Heart right ventricle (tissue), 16 donors: ENCODE measurements at regions of chr11 and their contacts with region 1.

Region 1: GRCh38 chr11:124865921-124866583 is 820 bp downstream of the ROBO3 start:
- DNase-seq: peak in 1 of 2 donors; percentile 54
- ATAC-seq: peak in 5 of 8 donors; percentile 26 to 60 (median 41)
- H3K4me3 ChIP-seq: peak overlapping the region; percentile 22 to 45 (median 40)
- H3K27ac ChIP-seq: no peak overlapping the region
- H3K4me1 ChIP-seq: peaks cover 12 to 65% (median 42%) of the 10 kb centered on the region in 9 donors
- H3K27me3 ChIP-seq: peaks cover 36 to 100% (median 99%) of the 10 kb centered on the region in 7 donors
- CTCF ChIP-seq: peak; percentile 69 to 90 (median 82)

Region 2: DNA sequence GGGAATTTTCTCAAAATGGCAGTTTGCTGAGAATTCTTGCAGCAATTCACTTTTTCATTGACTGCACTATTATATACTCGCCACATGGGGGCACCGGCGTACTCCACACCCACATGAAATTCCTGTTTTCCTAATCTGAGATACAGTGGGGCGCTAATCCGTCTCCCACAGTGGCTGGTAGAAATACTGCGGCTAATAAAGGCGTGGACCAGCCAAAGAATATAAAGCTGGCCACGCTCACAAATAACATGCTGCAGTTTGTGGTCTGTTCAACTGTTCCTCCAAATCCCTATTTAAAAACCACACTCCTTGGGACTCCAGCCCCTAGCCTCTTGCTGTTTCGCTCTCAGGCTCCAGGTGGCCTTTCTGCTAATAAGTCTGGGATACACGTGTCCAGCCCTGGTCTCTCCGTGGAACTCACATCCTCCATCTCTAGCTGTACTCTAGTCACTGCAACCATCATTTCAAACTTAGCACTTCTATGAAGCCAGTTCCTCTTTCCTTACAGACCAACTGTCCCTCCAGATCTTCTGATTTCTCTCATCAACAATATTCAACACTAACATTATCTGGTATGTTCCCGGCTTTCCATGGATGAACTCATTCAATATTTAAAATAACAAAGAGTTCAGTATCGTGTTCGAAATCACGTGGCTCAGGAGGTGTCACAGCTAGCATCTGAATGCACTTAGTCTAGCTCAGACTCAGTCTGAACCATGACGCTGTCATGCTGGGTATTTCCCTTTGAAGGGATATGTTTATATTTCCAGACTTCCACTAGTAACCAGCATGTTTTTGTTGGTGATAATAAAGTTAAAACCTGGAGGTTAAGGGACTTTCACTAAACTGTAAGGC is 221.4 kb before region 1 on chr11:
- intact Hi-C with region 1: loop called in 1 of 10 experiments (anchors 10 kb)
- DNase-seq: peak; percentile 17 to 35
- ATAC-seq: peak; percentile 57 to 88 (median 80)
- H3K4me3 ChIP-seq: peak overlapping the region in 4 of 10 donors; percentile 1 to 26 (median 12)
- H3K27ac ChIP-seq: no peak overlapping the region
- H3K4me1 ChIP-seq: peaks cover 0 to 12% (median 6%) of the 10 kb centered on the region in 9 donors
- H3K27me3 ChIP-seq: no peaks in the 10 kb centered on the region
- CTCF ChIP-seq: peak; percentile 72 to 87 (median 81)

Region 3: DNA sequence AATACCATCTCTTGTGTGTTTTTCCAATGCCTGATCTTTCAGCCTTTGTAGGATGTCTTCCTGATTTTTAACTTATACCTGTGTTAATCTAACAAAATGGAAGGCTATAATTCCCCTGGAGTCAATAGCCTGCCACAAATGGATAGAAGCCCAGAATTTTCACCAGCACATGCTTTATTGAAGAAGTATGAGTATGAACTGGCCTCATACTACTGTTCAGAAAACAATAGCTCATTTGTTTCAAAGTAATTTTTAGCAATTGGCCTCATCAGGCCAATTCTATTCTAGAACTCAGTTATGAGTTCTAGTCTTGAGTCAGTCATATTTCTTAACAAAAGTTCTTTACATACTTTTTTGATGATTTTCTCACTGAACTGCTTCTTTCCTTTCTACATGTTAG is 156.5 kb after region 1 on chr11:
- intact Hi-C with region 1: no loop called
- DNase-seq: no peak
- ATAC-seq: no peak
- H3K4me3 ChIP-seq: no peak overlapping the region
- H3K27ac ChIP-seq: no peak overlapping the region
- H3K4me1 ChIP-seq: no peaks in the 10 kb centered on the region
- H3K27me3 ChIP-seq: no peaks in the 10 kb centered on the region
- CTCF ChIP-seq: no peak